A549 (cell line): ENCODE measurements at regions of chr20 and their contacts with region 1.

Region 1: GRCh38 chr20:354298-355064 is 7.6 kb downstream of the NRSN2 start:
- DNase-seq: peak; percentile 83 to 95
- ATAC-seq: peak; percentile 85 to 95
- H3K4me3 ChIP-seq: no peak overlapping the region
- H3K27ac ChIP-seq: peak overlapping the region; percentile 71 to 81
- H3K4me1 ChIP-seq: peaks cover 13% of the 10 kb centered on the region; the same call in 2 of the 3 replicates
- CTCF ChIP-seq: peak; percentile 99
- EP300 ChIP-seq: no peak
- POLR2A ChIP-seq: no peak
- RAD21 ChIP-seq: peak; percentile 99 to 100

Region 2: DNA sequence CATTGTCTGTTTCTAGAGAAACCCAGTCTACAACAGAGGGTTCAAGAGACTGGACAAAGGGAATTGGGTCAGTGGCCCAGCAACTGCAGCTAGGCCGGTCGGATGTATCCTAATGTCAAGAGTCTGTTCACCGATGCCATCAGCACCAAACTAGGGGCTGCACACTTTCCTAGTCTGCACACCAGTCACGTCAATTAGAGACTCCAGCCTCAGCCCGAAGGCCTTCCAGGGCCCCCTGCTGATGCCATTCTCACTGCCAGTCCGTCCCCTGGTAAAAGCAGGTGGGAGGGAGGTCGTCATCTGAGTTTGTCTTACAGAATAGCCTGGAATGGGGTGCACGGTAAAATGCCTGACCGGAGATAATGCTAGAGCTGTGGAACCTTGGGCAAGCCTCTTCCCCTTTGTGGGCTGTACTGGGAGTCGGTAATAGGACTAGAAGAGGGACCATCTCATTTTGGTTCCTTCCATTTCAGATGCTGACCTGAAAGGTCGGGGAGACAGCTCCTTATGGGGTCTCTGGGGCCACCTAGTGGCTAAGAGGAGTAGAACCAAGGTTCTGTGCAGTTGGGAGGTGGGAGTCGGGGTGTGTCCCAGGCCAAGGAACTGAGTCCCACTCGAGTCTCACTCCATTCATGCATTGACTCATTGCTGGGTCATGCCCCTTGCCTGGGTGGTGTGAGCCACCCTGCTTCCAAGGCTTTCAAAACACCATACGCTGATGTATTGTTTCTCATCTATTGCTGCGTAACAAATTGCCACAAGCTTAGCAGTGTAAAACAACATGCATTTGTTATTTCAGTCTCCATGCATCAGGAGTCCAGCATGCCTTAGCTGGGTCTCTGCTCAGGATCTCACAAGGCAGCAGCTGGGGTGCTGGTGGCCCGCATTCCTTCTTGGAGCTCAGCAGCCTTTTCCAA is 24.0 kb before region 1 on chr20:
- CTCF ChIA-PET with region 1: interaction called, 11 read pairs
- POLR2A ChIA-PET with region 1: no interaction called
- DNase-seq: peak; percentile 79 to 88
- ATAC-seq: peak; percentile 25 to 63
- H3K4me3 ChIP-seq: no peak overlapping the region
- H3K27ac ChIP-seq: peak overlapping the region in 1 of 2 experiments; percentile 12; a peak in 1 of 6 replicates
- H3K4me1 ChIP-seq: peaks cover 32% of the 10 kb centered on the region
- CTCF ChIP-seq: peak; percentile 86
- EP300 ChIP-seq: no peak
- POLR2A ChIP-seq: no peak
- RAD21 ChIP-seq: peak; percentile 84 to 93

Region 3: GRCh38 chr20:381581-382290 is 27.3 kb after region 1 on chr20:
- CTCF ChIA-PET with region 1: interaction called, 175 read pairs
- POLR2A ChIA-PET with region 1: interaction called, 3 read pairs
- DNase-seq: peak; percentile 64 to 91
- ATAC-seq: peak; percentile 68 to 72
- H3K4me3 ChIP-seq: peak overlapping the region; percentile 93
- H3K27ac ChIP-seq: peak overlapping the region; percentile 94 to 98
- H3K4me1 ChIP-seq: peaks cover 65% of the 10 kb centered on the region
- CTCF ChIP-seq: no peak
- EP300 ChIP-seq: peak; percentile 33 to 40; a peak in 2 of 5 replicates
- POLR2A ChIP-seq: peak; percentile 41; the same call in 1 of the 2 replicates
- RAD21 ChIP-seq: peak in 1 of 2 experiments; percentile 43; a peak in 2 of 5 replicates

Region 4: GRCh38 chr20:401682-402495 is 47.4 kb after region 1 on chr20:
- CTCF ChIA-PET with region 1: interaction called, 43 read pairs
- POLR2A ChIA-PET with region 1: interaction called, 5 read pairs
- DNase-seq: peak; percentile 99 to 100
- ATAC-seq: peak; percentile 85 to 90
- H3K4me3 ChIP-seq: 0 out of 3 replicates have a peak overlapping the region, but pooled peaks have one; percentile 4
- H3K27ac ChIP-seq: peak overlapping the region; percentile 93 to 99
- H3K4me1 ChIP-seq: peaks cover 42% of the 10 kb centered on the region
- CTCF ChIP-seq: no peak
- EP300 ChIP-seq: peak; percentile 97 to 98; a peak in 4 of 5 replicates
- POLR2A ChIP-seq: no peak
- RAD21 ChIP-seq: peak in 1 of 2 experiments; percentile 9; a peak in 1 of 5 replicates

Region 5: DNA sequence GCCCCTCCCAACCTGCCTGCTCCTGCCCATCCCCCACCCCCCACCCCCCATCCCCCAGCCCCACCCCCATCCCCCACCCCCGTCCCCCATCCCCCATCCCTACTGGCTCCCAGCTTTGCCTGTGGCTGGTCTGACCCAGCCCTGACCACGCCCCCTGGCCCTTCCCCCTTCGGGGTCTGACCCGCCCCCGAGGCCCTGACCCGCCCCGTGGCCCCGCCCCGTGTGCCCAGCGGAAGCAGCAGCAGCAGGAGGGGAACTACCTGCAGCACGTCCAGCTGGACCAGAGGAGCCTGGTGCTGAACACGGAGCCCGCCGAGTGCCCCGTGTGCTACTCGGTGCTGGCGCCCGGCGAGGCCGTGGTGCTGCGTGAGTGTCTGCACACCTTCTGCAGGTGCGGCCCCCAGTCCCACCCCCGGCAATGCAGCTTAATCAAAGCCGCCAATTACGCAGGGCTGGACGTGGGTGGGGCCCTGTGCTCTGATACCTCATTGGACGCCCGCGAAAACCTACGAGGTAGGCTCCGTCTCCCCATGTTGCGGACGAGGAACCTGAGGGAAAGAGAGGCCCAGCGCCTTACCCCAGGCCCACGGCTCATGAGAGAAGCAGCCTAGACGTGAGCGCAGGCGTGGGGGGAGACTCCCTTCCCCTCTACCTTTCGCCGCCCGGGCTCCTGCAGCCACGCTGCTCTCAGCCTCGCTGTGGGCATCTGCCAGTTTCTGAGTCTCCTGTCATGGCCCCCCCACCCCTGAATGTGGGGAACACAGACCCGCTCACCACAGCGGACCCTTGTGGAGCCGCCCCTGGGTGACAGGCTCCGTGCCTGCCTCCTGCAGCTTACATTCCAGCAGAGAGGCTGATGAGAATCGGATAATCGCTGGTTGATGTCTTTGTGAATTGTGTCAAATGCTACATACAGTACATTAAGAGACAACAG is 66.4 kb after region 1 on chr20:
- CTCF ChIA-PET with region 1: interaction called, 1,229 read pairs
- POLR2A ChIA-PET with region 1: no interaction called
- DNase-seq: peak; percentile 63 to 70
- ATAC-seq: peak; percentile 11 to 69; a peak in 3 of 6 replicates
- H3K4me3 ChIP-seq: no peak overlapping the region
- H3K27ac ChIP-seq: peak overlapping the region in 1 of 2 experiments; percentile 59; a peak in 3 of 6 replicates
- H3K4me1 ChIP-seq: peaks cover 21% of the 10 kb centered on the region
- CTCF ChIP-seq: no peak
- EP300 ChIP-seq: no peak
- POLR2A ChIP-seq: no peak
- RAD21 ChIP-seq: no peak

Region 6: GRCh38 chr20:467755-468154 is 113.3 kb after region 1 on chr20:
- CTCF ChIA-PET with region 1: interaction called, 40 read pairs
- POLR2A ChIA-PET with region 1: interaction called, 3 read pairs
- DNase-seq: no peak
- ATAC-seq: no peak
- H3K4me3 ChIP-seq: no peak overlapping the region
- H3K27ac ChIP-seq: no peak overlapping the region
- H3K4me1 ChIP-seq: peaks cover 5% of the 10 kb centered on the region; the same call in 2 of the 3 replicates
- CTCF ChIP-seq: no peak
- EP300 ChIP-seq: no peak
- POLR2A ChIP-seq: no peak
- RAD21 ChIP-seq: no peak

Region 7: DNA sequence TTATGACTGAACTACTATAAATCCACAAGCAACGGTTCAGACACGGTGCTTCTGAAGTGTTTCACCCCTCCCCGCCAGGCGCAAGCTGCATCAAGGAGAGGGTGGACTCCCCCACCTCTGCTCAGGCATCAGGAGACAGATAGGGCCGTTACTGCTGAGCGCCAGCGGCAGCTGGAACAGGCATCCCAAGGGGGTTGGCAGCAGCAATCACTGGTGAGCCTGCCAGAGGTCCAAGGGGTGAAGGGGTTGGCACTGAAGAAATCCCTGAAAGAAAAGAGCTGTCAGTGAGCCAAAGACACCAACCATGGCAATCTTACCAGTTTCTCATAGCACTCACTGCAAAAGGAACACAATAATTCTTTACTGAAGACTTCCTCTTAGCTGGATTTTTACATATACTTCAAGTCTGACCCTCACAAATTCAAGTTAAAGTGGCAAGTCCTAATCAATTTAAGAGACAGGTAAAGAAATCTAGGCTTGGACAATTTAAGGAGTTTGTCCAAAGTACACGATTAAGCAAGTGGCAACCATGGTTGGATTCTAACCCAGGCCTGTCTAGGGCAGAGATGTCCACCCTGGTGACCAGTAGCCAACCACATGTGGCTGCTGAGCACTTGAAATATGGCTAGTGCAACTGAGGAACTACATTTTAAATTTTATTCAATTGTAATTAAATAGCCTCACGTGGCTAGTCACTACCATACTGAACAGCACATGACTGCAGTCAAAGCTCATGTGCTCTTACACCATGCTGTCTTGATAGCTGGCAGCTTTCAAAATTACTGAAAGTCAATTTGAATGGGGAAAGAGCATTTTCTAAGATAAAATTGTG is 129.5 kb after region 1 on chr20:
- CTCF ChIA-PET with region 1: interaction called, 71 read pairs
- POLR2A ChIA-PET with region 1: interaction called, 8 read pairs
- DNase-seq: no peak
- ATAC-seq: no peak
- H3K4me3 ChIP-seq: no peak overlapping the region
- H3K27ac ChIP-seq: no peak overlapping the region
- H3K4me1 ChIP-seq: peaks cover 3% of the 10 kb centered on the region; the same call in 2 of the 3 replicates
- CTCF ChIP-seq: no peak
- EP300 ChIP-seq: no peak
- POLR2A ChIP-seq: no peak
- RAD21 ChIP-seq: no peak